Caco-2 (cell line): ENCODE measurements at regions of chr20 and their contacts with region 1.

Region 1: GRCh38 chr20:31630187-31630790 is 7.4 kb upstream of the COX4I2 start:
- DNase-seq: no peak
- H3K4me3 ChIP-seq: no peak overlapping the region
- H3K4me3 Mint-ChIP-seq: no peak overlapping the region
- H3K27ac Mint-ChIP-seq: no peak overlapping the region
- H3K4me1 ChIP-seq: peaks cover 9% of the 10 kb centered on the region; the same call in 1 of the 2 replicates
- H3K4me1 Mint-ChIP-seq: no peaks in the 10 kb centered on the region
- H3K27me3 ChIP-seq: no peaks in the 10 kb centered on the region
- H3K27me3 Mint-ChIP-seq: no peaks in the 10 kb centered on the region
- CTCF ChIP-seq: no peak

Region 2: GRCh38 chr20:31414380-31414779 is 215.9 kb before region 1 on chr20:
- CTCF ChIA-PET with region 1: no interaction called
- POLR2A ChIA-PET with region 1: no interaction called
- intact Hi-C with region 1: no loop called
- DNase-seq: no peak
- H3K4me3 ChIP-seq: no peak overlapping the region
- H3K4me3 Mint-ChIP-seq: no peak overlapping the region
- H3K27ac Mint-ChIP-seq: no peak overlapping the region
- H3K4me1 ChIP-seq: no peaks in the 10 kb centered on the region
- H3K4me1 Mint-ChIP-seq: no peaks in the 10 kb centered on the region
- H3K27me3 ChIP-seq: no peaks in the 10 kb centered on the region
- H3K27me3 Mint-ChIP-seq: peaks cover 22% of the 10 kb centered on the region
- CTCF ChIP-seq: no peak

Region 3: GRCh38 chr20:31674895-31675827 is 44.9 kb after region 1 on chr20:
- CTCF ChIA-PET with region 1: interaction called, 9 read pairs
- POLR2A ChIA-PET with region 1: no interaction called
- intact Hi-C with region 1: loop called (anchors 1 kb)
- DNase-seq: no peak
- H3K4me3 ChIP-seq: no peak overlapping the region
- H3K4me3 Mint-ChIP-seq: peak overlapping the region; percentile 26
- H3K27ac Mint-ChIP-seq: peak overlapping the region; percentile 81
- H3K4me1 ChIP-seq: peaks cover 78% of the 10 kb centered on the region
- H3K4me1 Mint-ChIP-seq: peaks cover 72% of the 10 kb centered on the region
- H3K27me3 ChIP-seq: no peaks in the 10 kb centered on the region
- H3K27me3 Mint-ChIP-seq: no peaks in the 10 kb centered on the region
- CTCF ChIP-seq: no peak

Region 4: GRCh38 chr20:31691646-31692275 is 61.5 kb after region 1 on chr20:
- CTCF ChIA-PET with region 1: interaction called, 11 read pairs
- POLR2A ChIA-PET with region 1: no interaction called
- intact Hi-C with region 1: no loop called
- DNase-seq: no peak
- H3K4me3 ChIP-seq: no peak overlapping the region
- H3K4me3 Mint-ChIP-seq: peak overlapping the region; percentile 5
- H3K27ac Mint-ChIP-seq: peak overlapping the region; percentile 27
- H3K4me1 ChIP-seq: peaks cover 62% of the 10 kb centered on the region
- H3K4me1 Mint-ChIP-seq: peaks cover 72% of the 10 kb centered on the region
- H3K27me3 ChIP-seq: no peaks in the 10 kb centered on the region
- H3K27me3 Mint-ChIP-seq: no peaks in the 10 kb centered on the region
- CTCF ChIP-seq: no peak

Region 5: DNA sequence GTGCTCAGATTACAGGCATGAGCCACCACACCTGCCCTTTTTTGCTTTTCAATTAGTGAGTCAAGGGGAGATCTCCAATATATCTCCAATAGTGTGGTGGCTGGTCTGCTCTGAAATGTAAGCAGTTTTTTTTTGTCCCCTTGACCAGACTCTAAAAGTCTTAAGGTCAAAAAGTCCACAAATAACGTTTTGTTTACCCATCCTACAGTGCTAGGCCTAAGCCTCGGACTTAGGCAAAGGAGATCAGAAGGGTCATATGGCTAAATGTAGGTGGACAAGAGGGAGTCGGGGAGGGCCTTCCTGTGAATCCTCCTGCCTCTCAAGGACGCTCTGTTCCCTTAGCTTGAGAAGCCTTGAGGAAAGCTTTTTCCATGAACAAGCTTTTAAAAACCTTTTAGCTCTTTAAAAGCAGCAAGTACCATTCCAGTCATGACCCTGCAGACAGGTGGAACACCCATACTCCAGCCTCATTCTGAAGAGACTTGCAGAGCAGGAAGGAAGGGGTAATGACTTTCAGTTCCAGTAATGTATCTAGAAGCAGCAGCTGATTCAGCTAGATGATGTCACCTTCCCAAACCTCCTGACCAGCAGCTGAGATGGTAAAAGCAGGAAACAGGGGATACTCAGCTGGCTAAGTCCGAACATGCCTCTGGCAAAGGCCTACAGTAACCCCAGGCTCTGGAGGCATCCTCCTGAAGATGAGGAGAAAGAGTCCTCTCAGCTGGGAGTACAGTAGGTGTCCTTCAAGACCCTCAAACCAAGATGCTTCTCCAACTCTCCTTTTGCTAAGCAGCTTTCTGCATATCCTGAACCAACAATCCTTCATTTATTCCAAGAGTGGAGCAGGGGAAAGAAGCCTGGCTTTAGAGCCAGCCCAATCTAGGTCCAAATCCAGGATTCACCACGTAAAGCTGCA is 68.8 kb after region 1 on chr20:
- CTCF ChIA-PET with region 1: interaction called, 10 read pairs
- POLR2A ChIA-PET with region 1: no interaction called
- intact Hi-C with region 1: no loop called
- DNase-seq: peak in 1 of 2 experiments; percentile 57
- H3K4me3 ChIP-seq: no peak overlapping the region
- H3K4me3 Mint-ChIP-seq: peak overlapping the region; percentile 44
- H3K27ac Mint-ChIP-seq: peak overlapping the region; percentile 89
- H3K4me1 ChIP-seq: peaks cover 94% of the 10 kb centered on the region
- H3K4me1 Mint-ChIP-seq: peaks cover 73% of the 10 kb centered on the region
- H3K27me3 ChIP-seq: no peaks in the 10 kb centered on the region
- H3K27me3 Mint-ChIP-seq: no peaks in the 10 kb centered on the region
- CTCF ChIP-seq: no peak

Region 6: DNA sequence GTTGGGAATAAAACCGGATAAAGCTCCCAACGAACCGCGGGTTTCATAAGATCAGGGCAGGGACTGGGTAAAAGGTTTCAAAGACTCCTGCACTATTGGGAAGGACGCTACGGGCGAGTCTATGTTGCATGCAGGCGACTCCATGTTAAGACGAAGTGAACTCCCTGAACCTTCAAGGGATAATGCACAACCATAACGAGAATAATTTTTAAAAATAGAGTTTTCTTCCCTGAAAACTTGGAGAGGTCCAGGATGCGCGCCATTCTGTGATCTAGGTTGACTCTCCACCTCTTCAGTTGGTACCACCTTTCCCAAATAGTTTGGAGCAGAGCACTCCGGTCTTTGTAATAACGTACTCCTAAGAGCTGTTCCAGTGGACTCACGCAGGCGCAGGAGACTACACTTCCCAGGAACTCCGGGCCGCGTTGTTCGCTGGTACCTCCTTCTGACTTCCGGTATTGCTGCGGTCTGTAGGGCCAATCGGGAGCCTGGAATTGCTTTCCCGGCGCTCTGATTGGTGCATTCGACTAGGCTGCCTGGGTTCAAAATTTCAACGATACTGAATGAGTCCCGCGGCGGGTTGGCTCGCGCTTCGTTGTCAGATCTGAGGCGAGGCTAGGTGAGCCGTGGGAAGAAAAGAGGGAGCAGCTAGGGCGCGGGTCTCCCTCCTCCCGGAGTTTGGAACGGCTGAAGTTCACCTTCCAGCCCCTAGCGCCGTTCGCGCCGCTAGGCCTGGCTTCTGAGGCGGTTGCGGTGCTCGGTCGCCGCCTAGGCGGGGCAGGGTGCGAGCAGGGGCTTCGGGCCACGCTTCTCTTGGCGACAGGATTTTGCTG is 108.7 kb after region 1 on chr20 and contains the start of gene TPX2:
- CTCF ChIA-PET with region 1: interaction called, 18 read pairs
- POLR2A ChIA-PET with region 1: no interaction called
- intact Hi-C with region 1: no loop called
- DNase-seq: peak; percentile 99 to 100
- H3K4me3 ChIP-seq: peak within 1 kb of the TSS; percentile 72
- H3K4me3 Mint-ChIP-seq: no peak within 1 kb of the TSS
- H3K27ac Mint-ChIP-seq: no peak within 1 kb of the TSS
- H3K4me1 ChIP-seq: 0 out of 2 replicates have a peak, but pooled peaks cover 6% of the 10 kb centered on the region
- H3K4me1 Mint-ChIP-seq: no peaks in the 10 kb centered on the region
- H3K27me3 ChIP-seq: no peaks in the 10 kb centered on the region
- H3K27me3 Mint-ChIP-seq: no peaks in the 10 kb centered on the region
- CTCF ChIP-seq: peak in 1 of 2 experiments; percentile 66
- total RNA-seq, gene TPX2: 221 and 237 TPM in 2 replicates

Region 7: DNA sequence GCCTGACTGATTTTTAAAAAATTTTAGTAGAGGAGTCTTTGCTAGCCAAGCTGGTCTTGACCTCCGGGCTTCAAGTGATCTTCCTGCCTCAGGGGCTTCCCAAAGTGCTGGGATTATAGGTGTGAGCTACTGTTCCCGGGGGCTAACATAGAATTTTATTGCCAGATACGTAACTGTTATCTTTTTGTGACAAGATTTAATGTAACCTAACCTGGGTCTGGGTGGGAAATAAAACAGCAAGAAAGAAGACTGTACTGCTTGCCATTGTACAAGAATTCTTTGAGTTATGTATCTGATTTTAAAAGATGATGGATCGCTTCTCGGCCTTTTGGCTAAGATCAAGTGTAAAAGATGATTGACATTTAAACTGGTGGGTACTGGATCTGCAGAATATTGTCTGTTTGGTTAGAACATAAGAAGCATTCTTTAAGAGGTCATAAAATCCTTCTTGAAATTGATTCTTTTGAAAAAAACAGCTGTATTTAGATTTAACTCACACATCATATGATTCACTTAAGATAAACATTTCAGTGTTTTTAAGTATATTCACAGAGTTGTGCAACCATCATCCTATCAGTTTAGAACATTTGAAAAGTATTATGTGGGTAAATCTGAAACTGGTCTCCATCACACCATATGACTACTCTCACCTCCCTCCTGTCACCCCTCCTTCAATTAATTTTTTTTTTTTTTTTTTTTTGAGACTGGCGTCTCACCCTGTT is 130.4 kb after region 1 on chr20:
- CTCF ChIA-PET with region 1: interaction called, 13 read pairs
- POLR2A ChIA-PET with region 1: no interaction called
- intact Hi-C with region 1: no loop called
- DNase-seq: no peak
- H3K4me3 ChIP-seq: no peak overlapping the region
- H3K4me3 Mint-ChIP-seq: no peak overlapping the region
- H3K27ac Mint-ChIP-seq: peak overlapping the region; percentile 32
- H3K4me1 ChIP-seq: peaks cover 19% of the 10 kb centered on the region
- H3K4me1 Mint-ChIP-seq: peaks cover 32% of the 10 kb centered on the region
- H3K27me3 ChIP-seq: no peaks in the 10 kb centered on the region
- H3K27me3 Mint-ChIP-seq: no peaks in the 10 kb centered on the region
- CTCF ChIP-seq: no peak

Region 8: DNA sequence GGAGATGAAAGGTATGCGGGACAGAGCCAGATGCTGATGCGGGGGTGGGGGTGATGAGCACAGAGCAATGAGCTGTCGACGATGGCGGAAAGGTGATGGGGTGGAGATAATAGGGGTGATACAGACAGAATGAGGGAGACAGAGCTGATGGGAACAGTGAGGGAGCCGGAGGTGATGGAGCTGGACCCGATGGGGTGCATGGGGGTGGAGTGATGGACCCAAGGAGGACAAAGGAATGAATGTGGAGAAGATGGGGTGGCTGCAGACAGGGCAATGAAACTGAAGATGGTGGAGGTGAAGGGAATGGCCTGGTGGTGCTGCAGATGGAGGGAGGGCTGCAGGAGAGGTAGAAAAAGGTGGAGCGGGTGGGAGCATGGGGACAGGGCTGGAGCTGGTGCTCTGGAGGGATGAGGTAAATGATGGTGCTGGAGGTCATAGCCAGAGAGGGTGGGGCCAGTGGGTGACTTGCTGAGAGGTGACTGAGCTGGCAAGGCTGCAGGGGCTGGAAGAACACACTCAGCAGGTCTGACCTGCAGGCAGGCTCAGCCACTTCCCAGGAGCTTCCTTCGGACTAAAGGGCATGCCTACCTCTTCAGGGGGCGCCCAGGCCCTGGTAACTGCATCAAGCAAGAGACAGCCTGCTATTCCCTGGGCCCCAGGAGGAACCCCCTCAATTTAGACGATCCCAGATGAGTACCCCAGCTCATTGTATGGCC is 221.1 kb after region 1 on chr20:
- CTCF ChIA-PET with region 1: interaction called, 12 read pairs
- POLR2A ChIA-PET with region 1: no interaction called
- intact Hi-C with region 1: no loop called
- DNase-seq: no peak
- H3K4me3 ChIP-seq: no peak overlapping the region
- H3K4me3 Mint-ChIP-seq: no peak overlapping the region
- H3K27ac Mint-ChIP-seq: no peak overlapping the region
- H3K4me1 ChIP-seq: peaks cover 7% of the 10 kb centered on the region; the same call in 1 of the 2 replicates
- H3K4me1 Mint-ChIP-seq: no peaks in the 10 kb centered on the region
- H3K27me3 ChIP-seq: peaks cover 11% of the 10 kb centered on the region
- H3K27me3 Mint-ChIP-seq: peaks cover 18% of the 10 kb centered on the region
- CTCF ChIP-seq: no peak